ENCODE measurements at regions of chr10 and their contacts with region 1.

Region 1: DNA sequence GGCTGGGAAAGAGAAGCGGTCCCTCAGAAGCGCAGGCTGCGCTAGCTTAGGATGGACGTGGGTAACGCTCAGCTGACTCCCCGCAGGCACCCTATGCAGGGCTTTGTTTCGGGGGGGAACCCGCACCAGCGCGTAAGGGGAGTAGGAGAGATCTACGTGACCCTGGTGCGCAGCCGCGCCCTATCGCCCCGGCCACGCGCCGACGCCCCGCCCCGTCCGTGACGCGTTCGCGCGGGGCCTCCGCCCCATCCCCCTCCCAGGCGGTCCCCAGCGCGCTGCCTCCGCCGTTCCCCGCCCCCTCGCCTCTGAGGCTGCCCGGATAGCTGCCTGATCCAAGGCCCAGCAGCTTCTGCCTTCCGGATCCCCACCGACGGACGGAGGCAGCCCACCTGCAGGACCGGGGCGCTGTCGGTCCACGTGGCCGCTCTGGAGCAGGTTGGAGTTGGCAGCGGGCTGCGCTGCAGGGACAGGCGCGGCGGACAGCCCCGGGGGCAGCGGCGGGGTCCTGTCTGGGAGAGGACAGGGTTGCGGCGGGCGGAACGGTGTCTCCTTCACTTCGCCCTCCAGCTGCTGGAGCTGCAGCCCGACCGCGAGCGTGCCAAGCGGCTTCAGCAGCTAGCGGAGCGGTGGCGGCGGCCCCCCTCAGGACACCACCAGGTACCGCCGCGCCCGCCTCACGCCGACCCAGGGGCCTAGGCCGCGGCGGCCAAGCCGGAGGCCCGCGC is at the start of gene VDAC2:
- DNase-seq: peak; percentile 94

Region 2: DNA sequence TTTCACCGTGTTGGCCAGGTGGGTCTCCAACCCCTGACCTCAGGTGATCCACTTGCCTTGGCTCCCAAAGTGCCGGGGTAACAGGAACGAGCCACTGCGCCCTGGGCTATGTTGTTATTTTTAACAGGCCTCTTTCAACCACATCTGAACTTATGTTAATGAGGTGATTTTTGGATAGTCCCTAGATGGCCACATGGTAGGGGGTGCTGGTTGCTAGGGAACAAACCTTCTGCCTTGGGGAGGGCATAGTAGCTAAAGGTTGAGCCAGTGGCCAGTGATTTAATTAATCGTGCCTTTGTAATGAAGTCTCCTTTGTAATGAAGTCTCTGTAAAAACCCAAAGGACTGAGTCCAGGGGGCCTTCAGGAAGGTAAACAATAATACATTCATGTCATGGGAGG is 16.2 kb after region 1 on chr10:
- CTCF ChIA-PET with region 1: interaction called, 8 read pairs
- POLR2A ChIA-PET with region 1: interaction called, 48 read pairs
- DNase-seq: no peak

Region 3: GRCh38 chr10:75253281-75254220 is 43.1 kb after region 1 on chr10:
- CTCF ChIA-PET with region 1: no interaction called
- POLR2A ChIA-PET with region 1: no interaction called
- DNase-seq: no peak

Measured in HEK293T (cell line).